ENCODE measurements at regions of chr2 and their contacts with region 1.

Region 1: DNA sequence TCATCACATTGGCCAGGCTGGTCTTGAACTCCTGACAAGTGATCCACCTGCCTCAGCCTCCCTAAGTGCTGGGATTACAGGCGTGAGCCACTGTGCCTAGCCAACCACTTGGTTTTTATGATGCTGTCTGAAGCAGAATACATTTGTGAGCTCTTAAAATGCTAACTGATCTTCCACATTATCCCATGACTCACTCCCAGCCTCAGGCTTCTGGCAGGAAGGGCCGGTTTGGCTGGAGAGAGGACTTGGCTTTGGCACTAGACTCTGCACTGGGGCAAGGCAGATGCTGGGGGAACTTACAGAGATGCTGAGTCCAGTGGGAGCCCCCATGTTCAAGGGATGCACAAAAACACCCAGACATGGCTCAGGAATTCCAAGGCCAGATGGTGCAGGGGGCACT is 40.5 kb upstream of the SH3BP4 start:
- DNase-seq: peak; percentile 67
- H3K4me3 ChIP-seq: no peak overlapping the region
- H3K27ac ChIP-seq: no peak overlapping the region
- H3K4me1 ChIP-seq: no peaks in the 10 kb centered on the region
- H3K27me3 ChIP-seq: no peaks in the 10 kb centered on the region
- CTCF ChIP-seq: no peak

Region 2: GRCh38 chr2:234313558-234313957 is 597.7 kb before region 1 on chr2:
- CTCF ChIA-PET with region 1: no interaction called
- dilution Hi-C with region 1: no loop called
- in situ Hi-C with region 1: no loop called
- intact Hi-C with region 1: no loop called
- DNase-seq: no peak
- H3K4me3 ChIP-seq: no peak overlapping the region
- H3K27ac ChIP-seq: no peak overlapping the region
- H3K4me1 ChIP-seq: no peaks in the 10 kb centered on the region
- H3K27me3 ChIP-seq: no peaks in the 10 kb centered on the region
- CTCF ChIP-seq: no peak

Region 3: DNA sequence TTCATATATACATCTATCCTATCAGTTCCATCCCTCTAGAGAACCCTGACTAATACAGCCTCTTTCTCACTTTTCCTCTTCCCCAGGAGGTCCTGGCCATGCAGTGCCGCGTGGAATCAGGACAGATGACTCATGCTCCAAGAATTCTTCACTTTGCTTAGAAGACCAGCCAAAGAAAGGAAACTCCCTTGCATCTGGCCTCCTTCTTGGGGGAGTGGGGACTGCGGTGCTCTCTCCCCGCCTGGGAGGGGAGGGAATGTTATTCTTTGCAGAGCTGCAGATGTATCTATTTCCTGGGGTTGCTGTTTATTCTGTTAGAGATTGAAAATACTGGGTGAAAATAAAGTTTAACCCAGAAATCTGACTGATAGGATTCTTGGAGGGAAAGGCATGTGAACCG is 70.9 kb before region 1 on chr2:
- CTCF ChIA-PET with region 1: no interaction called
- dilution Hi-C with region 1: loop called (anchors 5 kb)
- in situ Hi-C with region 1: no loop called
- intact Hi-C with region 1: no loop called
- DNase-seq: peak; percentile 73
- H3K4me3 ChIP-seq: no peak overlapping the region
- H3K27ac ChIP-seq: no peak overlapping the region
- H3K4me1 ChIP-seq: peaks cover 9% of the 10 kb centered on the region
- H3K27me3 ChIP-seq: no peaks in the 10 kb centered on the region
- CTCF ChIP-seq: no peak

Region 4: DNA sequence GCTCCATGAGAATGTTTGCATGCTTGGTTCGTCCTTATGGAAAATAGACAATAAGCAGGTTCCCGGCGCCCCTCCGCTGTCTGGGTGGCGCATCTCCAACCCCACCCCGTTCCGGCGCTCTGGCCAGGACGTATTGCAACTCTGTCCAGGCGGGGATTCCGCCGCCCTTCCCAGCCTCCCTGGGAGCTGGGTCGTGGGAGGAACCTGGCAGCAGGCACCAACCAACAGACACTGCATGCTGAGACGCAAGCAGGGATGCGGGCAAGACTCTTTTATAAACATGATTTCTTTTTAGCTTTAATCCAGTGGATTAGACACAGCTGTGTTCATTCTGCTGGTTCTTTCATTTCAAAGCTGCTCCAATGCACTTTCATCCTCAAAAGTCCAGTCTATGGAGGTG is 280.7 kb after region 1 on chr2:
- CTCF ChIA-PET with region 1: no interaction called
- dilution Hi-C with region 1: no loop called
- in situ Hi-C with region 1: no loop called
- intact Hi-C with region 1: no loop called
- DNase-seq: no peak
- H3K4me3 ChIP-seq: peak overlapping the region in 2 of 3 experiments; percentile 4 to 6
- H3K27ac ChIP-seq: no peak overlapping the region
- H3K4me1 ChIP-seq: no peaks in the 10 kb centered on the region
- H3K27me3 ChIP-seq: peaks cover 8% of the 10 kb centered on the region
- CTCF ChIP-seq: no peak

Measured in mammary epithelial cell (primary cell).